Left colon (tissue), 2 donors: ENCODE measurements at regions of chr4 and their contacts with region 1.

Region 1: GRCh38 chr4:149370785-149371420 is 444.7 kb downstream of the IQCM start:
- DNase-seq: peak in 1 of 2 donors; percentile 7
- ATAC-seq: peak; percentile 95

Region 2: GRCh38 chr4:149247164-149247563 is 123.7 kb before region 1 on chr4:
- intact Hi-C with region 1: no loop called
- DNase-seq: no peak
- ATAC-seq: no peak

Region 3: GRCh38 chr4:149521611-149522425 is 150.9 kb after region 1 on chr4:
- intact Hi-C with region 1: no loop called
- DNase-seq: peak in 1 of 2 donors; percentile 11
- ATAC-seq: peak; percentile 99

Region 4: GRCh38 chr4:149897783-149898182 is 526.9 kb after region 1 on chr4:
- intact Hi-C with region 1: loop called in 1 of 2 experiments (anchors 10 kb)
- DNase-seq: no peak
- ATAC-seq: peak; percentile 40